ENCODE measurements at regions of chr13 and their contacts with region 1.

Region 1: GRCh38 chr13:97432917-97433726 is 847 bp upstream of the RAP2A start:
- DNase-seq: peak; percentile 100
- H3K4me3 ChIP-seq: peak overlapping the region; percentile 88
- H3K27ac ChIP-seq: peak overlapping the region; percentile 100
- H3K27me3 ChIP-seq: no peaks in the 10 kb centered on the region
- CTCF ChIP-seq: no peak

Region 2: GRCh38 chr13:95771905-95772304 is 1661.2 kb before region 1 on chr13:
- CTCF ChIA-PET with region 1: interaction called, 10 read pairs
- POLR2A ChIA-PET with region 1: no interaction called
- DNase-seq: no peak
- H3K4me3 ChIP-seq: no peak overlapping the region
- H3K27ac ChIP-seq: no peak overlapping the region
- H3K27me3 ChIP-seq: no peaks in the 10 kb centered on the region
- CTCF ChIP-seq: no peak

Region 3: GRCh38 chr13:97474349-97474980 is 41.3 kb after region 1 on chr13:
- CTCF ChIA-PET with region 1: interaction called, 10 read pairs
- POLR2A ChIA-PET with region 1: no interaction called
- DNase-seq: peak; percentile 8
- H3K4me3 ChIP-seq: no peak overlapping the region
- H3K27ac ChIP-seq: peak overlapping the region; percentile 49
- H3K27me3 ChIP-seq: no peaks in the 10 kb centered on the region
- CTCF ChIP-seq: no peak

Region 4: DNA sequence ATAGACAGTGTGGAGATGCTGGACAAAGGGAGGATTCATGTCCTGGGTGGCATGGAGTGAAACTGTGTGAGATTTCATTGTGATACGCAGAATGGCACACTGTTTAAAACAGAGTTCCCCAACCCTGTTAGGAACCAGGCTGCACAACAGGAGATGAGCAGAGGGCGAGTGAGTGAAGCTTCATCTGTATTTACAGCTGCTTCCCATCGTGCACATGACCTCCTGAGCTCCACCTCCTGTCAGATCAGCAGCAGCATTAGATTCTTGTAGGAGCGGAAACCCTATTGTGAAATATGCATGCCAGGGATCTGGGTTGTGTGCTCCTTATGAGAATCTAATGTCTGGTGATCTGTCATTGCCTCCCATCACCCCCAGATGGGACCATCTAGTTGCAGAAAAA is 73.4 kb after region 1 on chr13:
- CTCF ChIA-PET with region 1: no interaction called
- POLR2A ChIA-PET with region 1: interaction called, 13 read pairs
- DNase-seq: peak; percentile 61
- H3K4me3 ChIP-seq: no peak overlapping the region
- H3K27ac ChIP-seq: no peak overlapping the region
- H3K27me3 ChIP-seq: peaks cover 3% of the 10 kb centered on the region
- CTCF ChIP-seq: no peak

Region 5: DNA sequence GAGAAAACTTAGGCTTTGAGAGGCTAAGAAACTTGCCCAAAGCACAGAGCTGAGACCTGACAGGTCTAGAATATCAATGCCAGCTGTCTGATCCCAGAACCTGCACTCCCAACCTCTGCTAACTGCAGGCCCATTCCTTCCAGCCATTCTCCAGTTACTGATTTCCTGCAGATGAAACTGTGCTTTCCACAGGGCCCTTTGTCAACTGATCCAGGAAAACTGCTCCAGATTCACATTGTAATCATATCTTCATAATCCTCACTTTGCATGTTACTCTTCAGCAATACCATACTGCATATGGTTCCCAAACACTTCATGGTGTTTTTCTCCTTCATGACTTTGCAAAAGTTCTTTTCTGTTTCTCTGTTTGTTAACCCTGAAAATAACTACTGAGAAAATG is 101.4 kb after region 1 on chr13:
- CTCF ChIA-PET with region 1: interaction called, 12 read pairs
- POLR2A ChIA-PET with region 1: no interaction called
- DNase-seq: no peak
- H3K4me3 ChIP-seq: no peak overlapping the region
- H3K27ac ChIP-seq: no peak overlapping the region
- H3K27me3 ChIP-seq: no peaks in the 10 kb centered on the region
- CTCF ChIP-seq: no peak

Region 6: GRCh38 chr13:97574926-97575325 is 141.8 kb after region 1 on chr13:
- CTCF ChIA-PET with region 1: interaction called, 24 read pairs
- POLR2A ChIA-PET with region 1: interaction called, 3 read pairs
- DNase-seq: peak; percentile 23
- H3K4me3 ChIP-seq: no peak overlapping the region
- H3K27ac ChIP-seq: no peak overlapping the region
- H3K27me3 ChIP-seq: peaks cover 3% of the 10 kb centered on the region
- CTCF ChIP-seq: peak; percentile 73

Region 7: GRCh38 chr13:97798836-97799235 is 365.7 kb after region 1 on chr13:
- CTCF ChIA-PET with region 1: interaction called, 14 read pairs
- POLR2A ChIA-PET with region 1: no interaction called
- DNase-seq: no peak
- H3K4me3 ChIP-seq: no peak overlapping the region
- H3K27ac ChIP-seq: no peak overlapping the region
- H3K27me3 ChIP-seq: peaks cover 3% of the 10 kb centered on the region
- CTCF ChIP-seq: no peak

Measured in AG04450 (cell line).